Activated naive CD4-positive, alpha-beta T cell treated with anti-CD3 and anti-CD28 coated beads, Interleukin-2, amount 10 ng/mL, durations not matched to agents 7 days and 5 days (primary cell): ENCODE measurements at regions of chr3 and their contacts with region 1.

Region 1: GRCh38 chr3:187041362-187042307 is 97.7 kb downstream of the RPL39L start:
- DNase-seq: peak; percentile 72
- H3K4me3 Mint-ChIP-seq: peak overlapping the region; percentile 56
- H3K27ac Mint-ChIP-seq: peak overlapping the region; percentile 92
- H3K4me1 Mint-ChIP-seq: peaks cover 85% of the 10 kb centered on the region
- H3K27me3 Mint-ChIP-seq: no peaks in the 10 kb centered on the region

Region 2: DNA sequence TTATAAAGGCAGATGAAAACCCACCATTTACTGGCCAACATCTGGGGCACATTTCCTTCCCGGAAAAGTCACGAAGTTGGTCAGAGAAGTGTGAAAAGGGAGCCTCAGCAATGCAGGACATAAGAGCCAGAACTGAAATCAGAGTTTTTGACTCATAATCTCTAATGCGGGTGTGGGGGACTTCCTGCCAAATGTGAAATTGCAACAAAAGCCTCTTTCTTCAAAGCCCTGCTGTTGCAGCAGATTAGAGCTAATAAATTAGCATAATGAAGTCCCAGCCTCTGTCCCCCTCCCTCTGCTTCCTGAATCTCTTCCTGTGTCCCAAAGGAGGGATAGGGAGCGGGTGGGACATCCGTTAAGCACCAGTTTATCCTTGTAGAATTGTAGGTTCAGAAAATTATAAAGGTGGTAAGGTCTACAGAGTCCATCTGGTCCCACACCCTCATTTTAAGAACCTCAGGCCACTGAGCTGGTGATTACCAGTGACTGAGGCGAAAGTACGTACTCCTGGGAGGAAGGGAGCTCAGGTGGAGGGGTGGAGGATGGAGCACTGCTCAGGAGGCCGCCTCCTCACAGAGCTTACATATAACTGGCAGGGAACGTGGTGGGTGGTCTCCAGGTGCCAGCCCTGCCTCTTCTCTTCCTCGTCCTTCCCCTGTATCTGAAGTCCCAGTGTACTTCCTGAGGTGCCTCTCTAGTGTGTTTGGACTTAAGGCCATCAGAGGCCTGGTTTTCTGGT is 76.3 kb before region 1 on chr3:
- CTCF ChIA-PET with region 1: no interaction called
- DNase-seq: no peak
- H3K4me3 Mint-ChIP-seq: no peak overlapping the region
- H3K27ac Mint-ChIP-seq: no peak overlapping the region
- H3K4me1 Mint-ChIP-seq: peaks cover 25% of the 10 kb centered on the region
- H3K27me3 Mint-ChIP-seq: no peaks in the 10 kb centered on the region

Region 3: DNA sequence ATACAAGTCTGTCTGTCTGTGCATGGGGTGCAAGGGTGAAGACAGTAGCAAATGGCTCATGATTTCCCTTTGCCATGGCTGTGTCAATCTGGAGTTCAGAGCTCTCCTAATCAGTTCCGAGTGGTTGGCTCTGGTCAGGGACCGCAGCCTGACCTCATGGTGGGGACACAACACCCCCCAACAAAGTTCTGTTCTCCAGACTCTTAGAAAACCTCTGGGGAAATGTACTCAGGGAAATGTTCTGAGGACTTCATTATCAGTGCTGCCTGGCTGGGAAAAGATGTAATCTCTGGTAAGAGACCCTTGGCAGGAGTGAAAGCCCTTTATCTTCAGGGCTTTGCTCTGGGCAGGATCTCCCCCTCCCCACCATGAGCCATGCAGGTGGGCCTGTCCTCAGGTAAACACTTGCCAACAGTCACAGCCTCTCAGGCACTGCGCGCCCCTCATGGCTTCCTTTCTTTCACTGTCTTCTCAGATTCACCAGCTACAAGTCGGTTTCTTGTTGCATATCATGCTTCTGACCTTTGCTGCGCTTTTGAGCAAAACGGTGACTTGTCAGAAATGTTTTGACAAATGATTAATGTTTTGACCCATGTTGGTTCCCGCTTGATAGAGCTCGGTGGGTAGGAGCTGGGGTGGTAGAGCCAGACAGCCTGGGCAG is 15.8 kb before region 1 on chr3:
- CTCF ChIA-PET with region 1: interaction called, 35 read pairs
- DNase-seq: peak; percentile 55
- H3K4me3 Mint-ChIP-seq: peak overlapping the region; percentile 85
- H3K27ac Mint-ChIP-seq: peak overlapping the region; percentile 96
- H3K4me1 Mint-ChIP-seq: peaks cover 69% of the 10 kb centered on the region
- H3K27me3 Mint-ChIP-seq: no peaks in the 10 kb centered on the region